ENCODE measurements at regions of chr12 and their contacts with region 1.

Region 1: DNA sequence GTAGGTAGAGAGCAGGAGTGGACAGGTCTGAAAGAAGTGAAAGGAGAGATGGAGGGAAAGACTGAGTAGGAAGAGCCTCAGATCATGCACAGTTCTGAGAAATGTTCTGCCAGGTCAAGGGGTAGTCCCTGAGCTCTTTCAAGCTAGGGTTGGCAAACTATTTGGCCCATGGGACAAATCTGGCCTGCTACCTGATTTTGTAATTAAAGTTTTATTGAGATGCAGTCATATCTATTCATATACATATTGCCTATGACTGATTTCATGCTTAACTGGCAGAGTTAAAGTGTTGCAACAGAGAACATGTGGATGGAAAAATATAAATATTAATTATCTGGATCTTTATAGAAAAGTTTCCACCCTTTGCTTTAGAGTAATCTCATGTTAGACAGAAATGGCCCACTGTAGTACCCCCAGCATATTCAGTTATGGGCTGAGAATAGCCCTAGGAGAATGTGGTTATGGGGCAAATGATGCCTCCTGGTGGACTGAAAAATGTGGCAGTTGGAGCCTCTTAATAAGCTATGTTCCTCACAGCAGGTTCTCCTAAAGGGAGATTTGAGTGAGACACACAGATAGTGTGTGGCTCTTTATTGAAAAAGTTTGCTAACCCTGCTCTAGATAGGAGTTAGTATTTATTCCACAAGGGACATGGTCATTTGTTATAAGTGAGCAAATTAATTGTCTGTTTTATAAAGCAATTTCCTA is 476.9 kb downstream of the LRIG3 start:
- DNase-seq: peak in 1 of 2 experiments; percentile 4
- H3K4me3 ChIP-seq: no peak overlapping the region
- H3K27ac ChIP-seq: no peak overlapping the region
- H3K4me1 ChIP-seq: no peaks in the 10 kb centered on the region
- H3K27me3 ChIP-seq: no peaks in the 10 kb centered on the region
- CTCF ChIP-seq: peak; percentile 53

Region 2: GRCh38 chr12:58741226-58741625 is 297.8 kb after region 1 on chr12:
- CTCF ChIA-PET with region 1: no interaction called
- POLR2A ChIA-PET with region 1: interaction called, 43 read pairs
- intact Hi-C with region 1: no loop called
- DNase-seq: no peak
- H3K4me3 ChIP-seq: no peak overlapping the region
- H3K27ac ChIP-seq: no peak overlapping the region
- H3K4me1 ChIP-seq: 0 out of 2 replicates have a peak, but pooled peaks cover 8% of the 10 kb centered on the region
- H3K27me3 ChIP-seq: no peaks in the 10 kb centered on the region
- CTCF ChIP-seq: no peak

Measured in PC-9 (cell line).